Uterus (tissue), 4 donors: ENCODE measurements at regions of chr15 and their contacts with region 1.

Region 1: DNA sequence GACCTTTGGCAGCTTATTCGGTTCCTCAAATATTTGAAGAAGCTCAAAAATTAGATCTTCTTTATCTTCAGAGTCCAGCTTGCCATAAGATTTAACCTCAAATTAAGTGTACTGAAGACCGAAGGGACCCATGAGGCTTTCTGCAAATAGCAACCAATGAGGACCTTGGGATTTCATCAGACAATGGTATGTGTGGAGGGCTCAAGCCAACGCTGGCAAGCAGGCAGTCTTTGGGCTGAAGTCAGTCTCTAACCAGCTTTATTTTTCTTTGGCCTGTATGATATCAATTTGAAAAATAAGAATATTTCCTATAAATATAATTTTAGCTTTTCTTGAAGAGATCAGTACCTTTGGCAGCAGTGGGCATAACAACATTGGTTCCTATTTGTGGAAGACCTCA is 692.7 kb downstream of the MCTP2 start:
- DNase-seq: no peak
- H3K4me3 ChIP-seq: no peak overlapping the region
- H3K27ac ChIP-seq: no peak overlapping the region
- H3K4me1 ChIP-seq: no peaks in the 10 kb centered on the region
- H3K27me3 ChIP-seq: no peaks in the 10 kb centered on the region
- CTCF ChIP-seq: no peak
- POLR2A ChIP-seq: no peak

Region 2: DNA sequence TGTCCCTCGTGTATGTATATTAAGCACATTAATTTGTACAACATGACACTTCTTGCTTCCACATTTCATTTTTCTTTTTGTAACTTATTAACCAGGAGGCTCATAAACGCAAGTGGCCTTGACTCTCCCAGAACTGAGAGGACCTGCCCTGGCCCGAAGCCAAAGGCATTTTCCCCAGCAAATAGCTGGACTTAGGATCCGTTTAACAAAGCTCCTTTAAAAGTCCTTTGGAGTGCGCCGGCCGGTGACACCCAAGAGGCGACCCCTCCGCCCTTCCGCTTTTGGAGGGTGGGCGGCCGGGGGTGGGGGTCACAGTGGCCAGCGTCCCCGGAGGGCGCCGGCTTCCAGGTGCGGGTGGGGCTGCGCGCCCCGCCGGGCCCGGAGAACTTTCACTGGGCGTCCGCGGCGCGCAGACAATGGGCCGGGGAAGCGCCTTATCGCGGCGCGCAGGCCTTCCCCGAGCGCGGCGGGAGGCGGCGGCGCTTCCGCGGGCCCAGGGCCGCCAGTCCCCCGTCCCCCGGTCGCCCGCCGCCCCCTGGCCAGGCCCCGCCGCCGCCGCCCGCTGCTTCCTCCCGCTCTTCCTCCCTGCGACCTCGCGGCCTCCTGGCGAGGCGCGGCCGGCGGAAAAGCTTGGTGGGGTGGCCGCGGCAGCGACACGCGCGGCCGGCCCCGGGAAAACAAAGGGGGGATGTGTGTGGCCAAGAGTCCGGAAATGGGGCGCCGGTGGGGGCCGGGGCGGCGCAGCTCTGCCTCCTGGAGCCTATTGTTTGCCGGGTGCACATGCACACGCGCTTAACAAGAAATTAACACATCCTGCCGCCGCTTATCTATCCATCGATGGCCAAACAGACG is 79.3 kb before region 1 on chr15:
- intact Hi-C with region 1: no loop called
- DNase-seq: peak; percentile 57 to 68
- H3K4me3 ChIP-seq: peak overlapping the region; percentile 24 to 43
- H3K27ac ChIP-seq: peak overlapping the region; percentile 67 to 73
- H3K4me1 ChIP-seq: no peaks in the 10 kb centered on the region
- H3K27me3 ChIP-seq: no peaks in the 10 kb centered on the region
- CTCF ChIP-seq: peak in 2 of 4 experiments; percentile 9 to 24
- POLR2A ChIP-seq: no peak

Region 3: GRCh38 chr15:94875550-94875949 is 48.5 kb before region 1 on chr15:
- intact Hi-C with region 1: loop called (anchors 2 kb)
- DNase-seq: no peak
- H3K4me3 ChIP-seq: no peak overlapping the region
- H3K27ac ChIP-seq: no peak overlapping the region
- H3K4me1 ChIP-seq: no peaks in the 10 kb centered on the region
- H3K27me3 ChIP-seq: no peaks in the 10 kb centered on the region
- CTCF ChIP-seq: no peak
- POLR2A ChIP-seq: no peak